BJ (cell line): ENCODE measurements at regions of chr6 and their contacts with region 1.

Region 1: DNA sequence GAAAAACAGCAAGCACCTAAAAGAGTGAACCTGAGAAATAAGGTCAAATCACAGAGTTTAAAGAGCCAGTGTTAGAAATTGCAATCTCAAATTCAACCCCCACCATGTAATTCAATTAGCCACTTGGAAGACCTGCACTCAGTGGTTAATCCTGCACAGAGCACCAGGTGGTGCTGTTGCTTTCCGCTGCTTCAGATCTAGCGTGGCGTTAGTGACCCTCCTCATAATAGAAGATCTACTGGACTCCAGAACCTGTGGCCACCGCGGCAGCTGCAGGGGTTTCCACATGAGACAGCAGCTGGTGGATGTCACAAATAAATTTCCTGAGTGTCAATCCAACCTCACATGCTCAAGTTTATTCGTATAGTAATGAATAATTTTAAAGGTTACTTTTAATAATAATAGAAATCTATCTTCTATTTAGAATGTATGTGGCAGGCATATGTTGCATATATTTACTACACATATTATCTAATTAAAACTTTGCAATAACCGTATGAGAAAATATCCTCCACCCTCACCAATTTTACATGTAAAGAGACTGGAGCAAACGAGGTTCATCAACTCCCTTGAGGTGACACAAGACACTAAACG is 84.4 kb downstream of the SYNE1 start:
- DNase-seq: no peak
- H3K4me3 ChIP-seq: no peak overlapping the region
- H3K27me3 ChIP-seq: no peaks in the 10 kb centered on the region
- CTCF ChIP-seq: peak; percentile 88

Region 2: GRCh38 chr6:152484806-152485205 is 67.9 kb before region 1 on chr6:
- CTCF ChIA-PET with region 1: interaction called, 25 read pairs
- POLR2A ChIA-PET with region 1: no interaction called
- DNase-seq: no peak
- H3K4me3 ChIP-seq: no peak overlapping the region
- H3K27me3 ChIP-seq: no peaks in the 10 kb centered on the region
- CTCF ChIP-seq: no peak

Region 3: GRCh38 chr6:152532616-152533015 is 20.1 kb before region 1 on chr6:
- CTCF ChIA-PET with region 1: interaction called, 10 read pairs
- POLR2A ChIA-PET with region 1: no interaction called
- DNase-seq: no peak
- H3K4me3 ChIP-seq: no peak overlapping the region
- H3K27me3 ChIP-seq: no peaks in the 10 kb centered on the region
- CTCF ChIP-seq: no peak

Region 4: DNA sequence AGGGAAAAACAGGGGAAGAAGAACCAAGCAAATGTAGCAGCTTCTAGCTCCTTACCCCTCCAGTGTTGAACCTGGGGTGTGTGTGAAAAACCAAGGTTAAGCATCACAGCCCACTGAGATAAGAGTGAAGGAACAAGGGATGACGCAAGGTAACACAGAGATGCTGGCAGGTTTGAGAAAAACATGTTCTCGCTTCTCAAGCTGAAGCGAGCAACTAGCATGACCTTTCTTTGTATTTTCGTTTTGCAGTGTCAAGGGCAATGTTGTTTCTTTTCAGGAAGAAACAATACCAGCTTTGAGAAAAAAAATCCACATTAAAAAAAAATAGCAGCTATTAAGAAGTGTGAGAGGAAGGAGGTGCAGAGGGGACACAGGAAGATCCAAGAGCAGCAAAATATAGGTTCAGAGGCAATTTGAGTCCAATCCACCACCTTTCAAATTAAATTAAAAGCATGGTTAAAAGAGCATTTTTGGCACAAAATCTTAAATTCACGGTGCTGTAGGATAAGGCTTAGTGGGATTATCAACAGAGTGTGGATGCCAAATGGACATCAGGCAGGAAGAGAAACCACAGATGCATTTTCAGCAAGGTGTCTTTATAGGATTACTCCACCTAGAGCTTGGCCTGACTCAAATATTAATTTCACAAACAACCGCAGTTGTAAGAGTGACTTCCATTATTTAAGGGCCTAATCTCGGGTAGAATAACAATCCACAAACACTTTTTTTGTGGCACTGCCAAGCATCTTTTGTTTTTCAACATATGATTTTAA is 13.6 kb after region 1 on chr6:
- CTCF ChIA-PET with region 1: interaction called, 11 read pairs
- POLR2A ChIA-PET with region 1: no interaction called
- DNase-seq: no peak
- H3K4me3 ChIP-seq: no peak overlapping the region
- H3K27me3 ChIP-seq: no peaks in the 10 kb centered on the region
- CTCF ChIP-seq: no peak

Region 5: GRCh38 chr6:152575621-152576150 is 23.0 kb after region 1 on chr6:
- CTCF ChIA-PET with region 1: interaction called, 19 read pairs
- POLR2A ChIA-PET with region 1: no interaction called
- DNase-seq: peak; percentile 29
- H3K4me3 ChIP-seq: no peak overlapping the region
- H3K27me3 ChIP-seq: no peaks in the 10 kb centered on the region
- CTCF ChIP-seq: no peak

Region 6: GRCh38 chr6:152642989-152643388 is 90.3 kb after region 1 on chr6:
- CTCF ChIA-PET with region 1: interaction called, 47 read pairs
- POLR2A ChIA-PET with region 1: no interaction called
- DNase-seq: no peak
- H3K4me3 ChIP-seq: no peak overlapping the region
- H3K27me3 ChIP-seq: no peaks in the 10 kb centered on the region
- CTCF ChIP-seq: peak; percentile 62

Region 7: DNA sequence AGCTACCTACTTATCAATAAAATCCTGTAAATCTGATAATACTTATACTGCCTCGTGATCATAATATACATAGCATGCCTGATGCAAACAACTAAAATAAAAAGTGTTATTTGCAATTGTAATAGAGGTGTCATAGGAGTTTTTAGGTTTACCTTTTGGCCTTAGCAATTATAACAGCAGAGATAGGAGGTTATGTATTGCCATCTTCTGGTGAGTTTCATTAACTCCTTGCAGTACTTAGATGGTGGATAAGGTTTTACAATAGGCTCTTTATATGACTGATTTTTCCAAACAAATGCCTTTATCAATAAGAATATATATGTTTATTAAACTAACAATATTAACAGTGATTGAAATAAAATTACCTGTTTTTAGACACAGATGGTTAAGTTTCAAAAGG is 117.2 kb after region 1 on chr6:
- CTCF ChIA-PET with region 1: interaction called, 63 read pairs
- POLR2A ChIA-PET with region 1: no interaction called
- DNase-seq: no peak
- H3K4me3 ChIP-seq: no peak overlapping the region
- H3K27me3 ChIP-seq: no peaks in the 10 kb centered on the region
- CTCF ChIP-seq: peak; percentile 37

Region 8: DNA sequence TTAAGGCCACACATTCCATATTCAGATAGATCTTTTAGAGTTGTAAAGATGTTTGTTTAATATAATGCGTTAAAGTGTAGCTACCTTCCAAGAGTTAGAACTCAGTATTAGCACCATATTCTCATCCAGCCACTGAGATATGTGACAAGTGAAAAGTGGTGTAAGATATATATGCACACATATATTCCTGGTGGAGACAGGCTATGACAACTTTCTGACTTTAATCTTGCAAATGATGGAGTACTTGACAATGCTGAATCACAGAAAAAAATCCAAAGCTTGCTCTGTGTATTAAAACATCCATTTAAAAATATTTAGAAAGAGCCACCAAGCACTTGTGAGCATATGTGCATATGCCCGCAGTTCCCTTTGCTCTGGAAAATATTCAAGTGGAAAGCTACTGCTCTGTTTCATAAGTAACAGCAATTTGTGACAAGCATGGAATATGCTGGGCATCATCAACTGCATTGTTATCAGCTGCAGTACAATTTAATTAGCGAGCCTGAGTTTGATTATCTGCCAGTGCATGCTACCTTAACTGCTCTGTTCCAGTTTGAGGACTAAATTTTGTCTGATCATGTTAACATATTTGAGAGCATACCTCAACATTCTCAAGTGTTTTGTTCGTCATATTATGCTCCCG is 262.6 kb after region 1 on chr6:
- CTCF ChIA-PET with region 1: no interaction called
- POLR2A ChIA-PET with region 1: no interaction called
- DNase-seq: no peak
- H3K4me3 ChIP-seq: no peak overlapping the region
- H3K27me3 ChIP-seq: no peaks in the 10 kb centered on the region
- CTCF ChIP-seq: no peak

Region 9: GRCh38 chr6:152845421-152845820 is 292.7 kb after region 1 on chr6:
- CTCF ChIA-PET with region 1: no interaction called
- POLR2A ChIA-PET with region 1: no interaction called
- DNase-seq: no peak
- H3K4me3 ChIP-seq: no peak overlapping the region
- H3K27me3 ChIP-seq: no peaks in the 10 kb centered on the region
- CTCF ChIP-seq: no peak